ENCODE measurements at regions of chr1 and their contacts with region 1.

Region 1: DNA sequence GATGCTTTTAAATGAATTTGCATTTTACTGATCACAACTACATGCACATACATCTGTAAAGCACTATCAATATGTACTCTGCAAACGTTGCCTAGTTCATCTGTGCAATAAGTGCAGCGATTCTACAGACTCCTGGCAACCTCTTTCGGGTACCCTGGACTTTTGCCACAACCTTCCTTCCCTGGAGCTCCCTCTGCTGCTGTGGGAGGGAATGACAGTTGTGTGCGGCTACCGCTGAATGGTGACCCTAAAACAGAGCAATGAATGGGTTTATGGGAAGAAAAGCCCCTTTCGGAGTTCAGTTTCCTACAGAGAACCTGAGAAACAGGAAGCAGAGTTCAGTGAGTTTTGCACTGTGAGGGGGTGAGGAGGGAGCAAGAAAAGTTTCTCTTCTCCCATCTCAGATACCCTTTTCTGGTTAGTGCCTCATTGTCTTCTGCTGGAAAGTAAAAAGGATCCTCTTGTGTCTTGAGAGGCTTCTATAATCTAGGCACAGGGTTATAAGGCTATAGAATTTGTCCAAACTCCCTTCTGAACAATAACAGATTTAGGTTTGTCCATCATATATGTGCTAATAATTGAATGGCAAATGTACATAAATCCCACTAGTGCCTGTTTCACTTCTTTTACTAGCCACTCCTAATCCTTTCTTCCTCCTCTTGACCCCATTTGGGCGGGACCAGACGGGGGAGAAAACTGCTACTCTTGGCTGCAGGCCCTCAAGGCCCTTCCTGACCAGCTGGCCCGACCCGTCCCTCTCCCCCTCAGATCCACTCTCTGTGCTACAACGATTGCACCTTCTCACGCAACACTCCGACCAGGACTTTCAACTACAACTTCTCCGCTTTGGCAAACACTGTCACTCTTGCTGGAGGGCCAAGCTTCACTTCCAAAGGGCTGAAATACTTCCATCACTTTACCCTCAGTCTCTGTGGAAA is 19.8 kb upstream of the SARS1 start:
- DNase-seq: peak; percentile 78
- ATAC-seq: peak; percentile 71
- H3K4me3 Mint-ChIP-seq: no peak overlapping the region
- H3K27ac Mint-ChIP-seq: no peak overlapping the region
- H3K4me1 Mint-ChIP-seq: peaks cover 3% of the 10 kb centered on the region
- H3K27me3 Mint-ChIP-seq: no peaks in the 10 kb centered on the region; the same call in 1 of the 2 replicates
- CTCF ChIP-seq: peak; percentile 70

Region 2: GRCh38 chr1:109112652-109113285 is 81.2 kb before region 1 on chr1:
- CTCF ChIA-PET with region 1: interaction called, 23 read pairs
- POLR2A ChIA-PET with region 1: no interaction called
- DNase-seq: peak; percentile 100
- ATAC-seq: peak; percentile 85
- H3K4me3 Mint-ChIP-seq: peak overlapping the region; percentile 79
- H3K27ac Mint-ChIP-seq: no peak overlapping the region
- H3K4me1 Mint-ChIP-seq: peaks cover 10% of the 10 kb centered on the region
- H3K27me3 Mint-ChIP-seq: peaks cover 82% of the 10 kb centered on the region
- CTCF ChIP-seq: peak; percentile 96

Region 3: DNA sequence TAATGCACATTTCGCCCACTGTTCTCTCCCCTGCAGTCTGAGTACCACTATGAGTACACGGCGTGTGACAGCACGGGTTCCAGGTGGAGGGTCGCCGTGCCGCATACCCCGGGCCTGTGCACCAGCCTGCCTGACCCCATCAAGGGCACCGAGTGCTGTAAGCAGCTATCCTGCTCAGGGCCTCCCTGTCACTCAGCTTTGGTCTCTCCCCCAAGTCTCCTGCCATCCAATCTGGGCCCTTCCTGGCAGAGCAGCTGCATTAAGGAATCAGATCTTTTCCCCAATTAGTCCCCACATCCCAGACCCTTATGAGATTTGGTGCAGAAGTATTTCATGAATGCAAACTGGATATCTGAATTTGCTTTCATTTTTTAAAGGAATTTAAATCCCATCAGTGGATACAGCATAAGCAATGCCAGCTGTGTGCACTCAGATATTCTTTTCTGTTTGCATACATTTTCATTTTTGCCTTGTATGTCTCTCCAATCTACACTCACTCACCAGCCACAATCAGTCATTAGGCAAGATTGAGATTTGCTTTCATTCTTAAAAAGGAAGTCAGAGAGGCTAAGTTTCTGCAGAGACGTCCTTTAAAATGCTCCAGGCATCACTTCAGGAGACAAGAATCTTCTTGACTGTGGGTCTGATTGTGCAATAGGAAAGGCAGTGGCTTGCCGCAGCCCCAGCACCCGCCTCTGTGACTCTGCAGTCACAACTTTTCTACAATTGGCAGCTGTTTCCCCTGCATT is 31.9 kb before region 1 on chr1:
- CTCF ChIA-PET with region 1: interaction called, 15 read pairs
- POLR2A ChIA-PET with region 1: no interaction called
- DNase-seq: no peak
- ATAC-seq: peak; percentile 87
- H3K4me3 Mint-ChIP-seq: no peak overlapping the region
- H3K27ac Mint-ChIP-seq: no peak overlapping the region
- H3K4me1 Mint-ChIP-seq: peaks cover 7% of the 10 kb centered on the region
- H3K27me3 Mint-ChIP-seq: no peaks in the 10 kb centered on the region
- CTCF ChIP-seq: no peak

Region 4: GRCh38 chr1:109167001-109167506 is 26.9 kb before region 1 on chr1:
- CTCF ChIA-PET with region 1: interaction called, 15 read pairs
- POLR2A ChIA-PET with region 1: no interaction called
- DNase-seq: no peak
- ATAC-seq: no peak
- H3K4me3 Mint-ChIP-seq: no peak overlapping the region
- H3K27ac Mint-ChIP-seq: no peak overlapping the region
- H3K4me1 Mint-ChIP-seq: peaks cover 18% of the 10 kb centered on the region
- H3K27me3 Mint-ChIP-seq: no peaks in the 10 kb centered on the region
- CTCF ChIP-seq: no peak

Region 5: DNA sequence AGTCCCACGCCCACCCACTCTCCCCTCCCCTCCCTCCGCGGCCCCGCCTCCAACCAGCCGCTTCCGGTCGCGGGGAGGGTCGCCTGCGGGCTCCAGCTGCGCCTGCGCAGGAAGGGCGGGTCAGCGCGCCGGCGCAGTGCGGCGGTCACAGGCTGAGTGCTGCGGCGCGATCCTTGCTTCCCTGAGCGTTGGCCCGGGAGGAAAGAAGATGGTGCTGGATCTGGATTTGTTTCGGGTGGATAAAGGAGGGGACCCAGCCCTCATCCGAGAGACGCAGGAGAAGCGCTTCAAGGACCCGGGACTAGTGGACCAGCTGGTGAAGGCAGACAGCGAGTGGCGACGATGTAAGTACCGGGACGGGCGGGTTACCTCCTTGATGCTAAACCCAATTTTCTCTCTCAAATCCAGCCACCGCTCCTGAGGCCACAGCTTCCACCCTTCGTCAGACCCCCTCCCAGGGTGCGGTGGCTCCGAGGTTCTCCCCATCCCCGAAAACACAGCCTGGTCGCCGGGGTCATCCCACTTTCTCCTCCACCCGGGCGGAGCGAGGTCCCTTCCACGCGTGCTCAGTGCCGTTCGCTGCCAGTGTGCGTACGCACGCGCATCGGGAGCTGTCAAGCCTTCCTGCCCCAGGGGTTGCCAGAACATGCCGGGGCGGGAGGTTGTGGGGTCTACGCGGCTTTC is 20.0 kb after region 1 on chr1 and contains the start of gene SARS1:
- CTCF ChIA-PET with region 1: interaction called, 19 read pairs
- POLR2A ChIA-PET with region 1: interaction called, 3 read pairs
- DNase-seq: peak; percentile 89
- ATAC-seq: peak; percentile 94
- H3K4me3 Mint-ChIP-seq: peak within 1 kb of the TSS; percentile 99
- H3K27ac Mint-ChIP-seq: peak within 1 kb of the TSS; percentile 92
- H3K4me1 Mint-ChIP-seq: peaks cover 21% of the 10 kb centered on the region
- H3K27me3 Mint-ChIP-seq: peaks cover 2% of the 10 kb centered on the region; the same call in 1 of the 2 replicates
- CTCF ChIP-seq: no peak
- total RNA-seq, gene SARS1: 126 to 149 TPM (median 129 TPM) in 3 replicates

Region 6: GRCh38 chr1:109248797-109249642 is 55.1 kb after region 1 on chr1 and contains the start of gene CELSR2:
- CTCF ChIA-PET with region 1: interaction called, 10 read pairs
- POLR2A ChIA-PET with region 1: interaction called, 3 read pairs
- DNase-seq: peak; percentile 88
- ATAC-seq: peak; percentile 84
- H3K4me3 Mint-ChIP-seq: peak within 1 kb of the TSS; percentile 63
- H3K27ac Mint-ChIP-seq: no peak within 1 kb of the TSS
- H3K4me1 Mint-ChIP-seq: peaks cover 24% of the 10 kb centered on the region
- H3K27me3 Mint-ChIP-seq: peaks cover 36% of the 10 kb centered on the region
- CTCF ChIP-seq: no peak
- total RNA-seq, gene CELSR2: 26.8 to 31.3 TPM (median 28.2 TPM) in 3 replicates

Region 7: DNA sequence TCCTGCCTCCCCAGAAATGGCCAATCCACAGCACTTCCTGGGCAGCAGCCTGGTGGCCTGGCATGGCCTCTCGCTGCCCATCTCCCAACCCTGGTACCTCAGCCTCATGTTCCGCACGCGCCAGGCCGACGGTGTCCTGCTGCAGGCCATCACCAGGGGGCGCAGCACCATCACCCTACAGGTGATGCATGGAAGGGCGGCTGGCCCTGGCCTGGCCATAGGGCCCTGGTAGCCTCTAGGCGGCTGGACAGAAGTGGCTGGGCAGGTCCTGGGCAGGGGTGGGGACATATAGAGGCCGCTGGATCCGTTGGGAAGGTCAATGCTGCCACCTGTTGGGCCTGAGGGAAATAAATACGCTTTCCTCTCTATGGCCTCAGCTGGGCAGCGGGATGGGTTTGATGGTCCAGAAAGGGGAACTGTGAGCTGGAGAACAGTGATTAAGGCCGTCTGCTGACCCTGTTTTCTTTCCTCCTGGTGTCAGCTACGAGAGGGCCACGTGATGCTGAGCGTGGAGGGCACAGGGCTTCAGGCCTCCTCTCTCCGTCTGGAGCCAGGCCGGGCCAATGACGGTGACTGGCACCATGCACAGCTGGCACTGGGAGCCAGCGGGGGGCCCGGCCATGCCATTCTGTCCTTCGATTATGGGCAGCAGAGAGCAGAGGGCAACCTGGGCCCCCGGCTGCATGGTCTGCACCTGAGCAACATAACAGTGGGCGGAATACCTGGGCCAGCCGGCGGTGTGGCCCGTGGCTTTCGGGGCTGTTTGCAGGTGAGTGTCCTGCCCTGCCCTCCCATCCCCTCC is 69.9 kb after region 1 on chr1:
- CTCF ChIA-PET with region 1: interaction called, 11 read pairs
- POLR2A ChIA-PET with region 1: no interaction called
- DNase-seq: peak; percentile 96
- ATAC-seq: peak; percentile 93
- H3K4me3 Mint-ChIP-seq: no peak overlapping the region
- H3K27ac Mint-ChIP-seq: no peak overlapping the region
- H3K4me1 Mint-ChIP-seq: peaks cover 21% of the 10 kb centered on the region
- H3K27me3 Mint-ChIP-seq: no peaks in the 10 kb centered on the region
- CTCF ChIP-seq: peak; percentile 97

Measured in WTC11 (cell line).